Activated naive CD4-positive, alpha-beta T cell treated with anti-CD3 and anti-CD28 coated beads for 36 hours (primary cell): ENCODE measurements at regions of chr5 and their contacts with region 1.

Region 1: GRCh38 chr5:91280362-91281269 is 102.5 kb downstream of the ARRDC3 start:
- DNase-seq: peak; percentile 94
- H3K4me3 Mint-ChIP-seq: peak overlapping the region; percentile 73
- H3K27ac Mint-ChIP-seq: peak overlapping the region; percentile 87
- H3K4me1 Mint-ChIP-seq: peaks cover 42% of the 10 kb centered on the region
- H3K27me3 Mint-ChIP-seq: no peaks in the 10 kb centered on the region

Region 2: DNA sequence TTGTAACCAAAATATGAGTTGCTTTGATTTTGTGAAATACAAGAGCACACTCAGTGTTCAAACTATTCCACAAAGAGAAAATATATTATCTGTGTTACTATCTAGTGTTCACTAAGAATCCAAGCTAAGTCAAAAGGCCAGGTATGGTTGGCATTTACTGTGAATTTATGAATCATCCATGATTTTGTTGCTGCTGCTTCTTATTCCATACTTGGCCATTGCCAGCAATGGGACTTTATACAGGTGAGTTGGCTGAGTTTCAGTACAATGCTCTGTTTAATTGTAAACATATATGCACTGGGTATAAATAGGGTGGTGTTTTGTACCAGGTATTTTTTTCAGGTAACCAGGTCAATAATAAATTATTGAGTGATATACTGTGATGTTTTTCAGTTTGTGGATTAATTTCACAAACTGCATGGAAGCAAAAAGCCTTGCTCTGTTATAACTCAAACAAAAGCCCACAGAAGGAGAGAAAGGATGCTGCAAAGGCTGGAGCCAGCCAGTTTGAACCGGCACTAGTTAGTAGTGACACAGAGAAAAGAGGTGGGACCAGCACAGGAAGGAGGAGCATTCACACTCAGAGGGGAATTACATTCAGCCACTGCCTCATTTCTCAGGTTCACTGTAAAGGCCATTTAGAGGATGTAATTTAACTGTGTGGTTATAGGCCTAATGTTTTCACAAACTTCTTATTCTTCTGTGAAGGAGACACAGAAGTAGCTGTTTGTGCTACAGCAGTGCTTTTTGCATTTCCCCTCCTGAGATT is 340.2 kb before region 1 on chr5:
- CTCF ChIA-PET with region 1: no interaction called
- intact Hi-C with region 1: loop called (anchors 1 kb)
- DNase-seq: peak; percentile 88
- H3K4me3 Mint-ChIP-seq: no peak overlapping the region
- H3K27ac Mint-ChIP-seq: peak overlapping the region; percentile 73
- H3K4me1 Mint-ChIP-seq: peaks cover 13% of the 10 kb centered on the region
- H3K27me3 Mint-ChIP-seq: no peaks in the 10 kb centered on the region

Region 3: DNA sequence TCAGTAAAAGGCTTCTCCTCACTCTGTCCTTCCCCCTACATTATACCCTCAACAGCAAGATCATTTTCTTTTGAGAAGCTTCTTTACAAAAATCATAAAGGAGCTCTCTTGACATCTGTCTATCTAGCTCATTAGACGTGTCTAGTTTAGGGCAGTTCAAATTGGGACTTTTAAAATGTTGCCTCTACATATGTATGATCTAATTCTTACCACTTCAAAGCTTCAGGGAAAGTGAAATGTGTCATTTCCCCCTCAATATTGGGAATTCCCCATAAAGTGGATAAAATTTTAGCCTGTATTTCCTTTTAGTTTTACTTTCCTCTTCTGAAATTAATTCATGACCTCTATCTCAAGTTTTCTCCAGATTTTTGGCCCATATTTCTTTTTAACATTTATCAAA is 221.2 kb before region 1 on chr5:
- CTCF ChIA-PET with region 1: no interaction called
- intact Hi-C with region 1: loop called (anchors 1 kb)
- DNase-seq: no peak
- H3K4me3 Mint-ChIP-seq: no peak overlapping the region
- H3K27ac Mint-ChIP-seq: no peak overlapping the region
- H3K4me1 Mint-ChIP-seq: peaks cover 28% of the 10 kb centered on the region
- H3K27me3 Mint-ChIP-seq: peaks cover 40% of the 10 kb centered on the region

Region 4: DNA sequence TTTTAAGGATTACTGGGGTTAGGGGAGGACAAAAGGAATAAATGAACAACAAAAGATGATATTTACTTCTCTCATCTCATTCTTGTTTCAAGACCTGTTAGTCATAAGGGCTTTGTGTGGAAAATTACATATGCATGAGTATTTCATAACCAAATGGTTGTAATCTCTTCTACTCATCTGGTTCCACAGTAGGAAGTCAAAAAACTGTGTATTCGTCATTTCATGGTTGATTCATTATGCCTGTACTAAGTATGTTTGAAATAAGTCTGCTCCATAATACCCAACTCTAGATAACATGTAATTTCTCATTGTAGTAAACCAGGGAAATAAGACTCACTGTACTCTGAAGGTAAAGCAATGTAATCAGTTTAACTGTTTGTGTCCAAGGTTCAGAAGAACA is 110.3 kb before region 1 on chr5:
- CTCF ChIA-PET with region 1: no interaction called
- intact Hi-C with region 1: loop called (anchors 2 kb)
- DNase-seq: no peak
- H3K4me3 Mint-ChIP-seq: no peak overlapping the region
- H3K27ac Mint-ChIP-seq: peak overlapping the region; percentile 16
- H3K4me1 Mint-ChIP-seq: peaks cover 18% of the 10 kb centered on the region
- H3K27me3 Mint-ChIP-seq: peaks cover 3% of the 10 kb centered on the region

Region 5: GRCh38 chr5:91225848-91226686 is 54.5 kb before region 1 on chr5:
- CTCF ChIA-PET with region 1: no interaction called
- intact Hi-C with region 1: loop called (anchors 1 kb)
- DNase-seq: peak; percentile 80
- H3K4me3 Mint-ChIP-seq: no peak overlapping the region
- H3K27ac Mint-ChIP-seq: no peak overlapping the region
- H3K4me1 Mint-ChIP-seq: peaks cover 4% of the 10 kb centered on the region
- H3K27me3 Mint-ChIP-seq: no peaks in the 10 kb centered on the region

Region 6: GRCh38 chr5:91266184-91266705 is 14.4 kb before region 1 on chr5:
- CTCF ChIA-PET with region 1: interaction called, 3 read pairs
- intact Hi-C with region 1: loop called (anchors 1 kb)
- DNase-seq: no peak
- H3K4me3 Mint-ChIP-seq: no peak overlapping the region
- H3K27ac Mint-ChIP-seq: no peak overlapping the region
- H3K4me1 Mint-ChIP-seq: peaks cover 22% of the 10 kb centered on the region
- H3K27me3 Mint-ChIP-seq: no peaks in the 10 kb centered on the region

Region 7: DNA sequence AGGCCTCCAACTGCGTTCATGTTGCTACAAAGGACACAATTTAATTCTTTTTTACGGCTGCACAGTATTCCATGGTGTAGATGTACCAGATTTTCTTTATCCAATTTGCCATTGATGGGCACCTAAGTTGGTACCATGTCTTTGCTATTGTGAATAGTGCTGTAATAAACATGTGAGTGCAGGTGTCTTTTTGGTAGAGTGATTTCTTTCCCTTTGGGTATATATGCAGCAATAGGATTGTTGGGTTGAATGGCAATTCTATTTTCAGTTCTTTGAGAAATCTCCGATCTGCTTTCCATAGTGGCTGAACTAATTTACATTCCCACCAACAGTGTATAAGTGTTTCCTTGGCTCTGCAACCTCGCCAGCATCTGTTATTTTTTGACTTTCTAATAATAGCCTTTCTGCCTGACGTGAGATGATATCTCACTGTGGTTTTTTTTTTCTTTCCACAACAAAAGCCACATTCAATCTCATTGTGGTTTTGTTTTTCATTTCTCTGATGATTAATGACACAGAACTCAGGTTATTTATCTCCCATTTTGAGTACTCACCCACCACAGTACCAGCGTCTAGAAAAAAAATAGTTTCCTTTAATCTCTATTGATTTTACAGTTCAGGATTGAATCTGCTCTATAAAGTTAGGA is 80.6 kb after region 1 on chr5:
- CTCF ChIA-PET with region 1: no interaction called
- intact Hi-C with region 1: loop called (anchors 1 kb)
- DNase-seq: no peak
- H3K4me3 Mint-ChIP-seq: no peak overlapping the region
- H3K27ac Mint-ChIP-seq: peak overlapping the region; percentile 26
- H3K4me1 Mint-ChIP-seq: peaks cover 10% of the 10 kb centered on the region
- H3K27me3 Mint-ChIP-seq: no peaks in the 10 kb centered on the region

Region 8: GRCh38 chr5:91449083-91449482 is 168.5 kb after region 1 on chr5:
- CTCF ChIA-PET with region 1: no interaction called
- intact Hi-C with region 1: no loop called
- DNase-seq: no peak
- H3K4me3 Mint-ChIP-seq: no peak overlapping the region
- H3K27ac Mint-ChIP-seq: no peak overlapping the region
- H3K4me1 Mint-ChIP-seq: no peaks in the 10 kb centered on the region
- H3K27me3 Mint-ChIP-seq: no peaks in the 10 kb centered on the region